ENCODE measurements at regions of chr1 and their contacts with region 1.

Region 1: DNA sequence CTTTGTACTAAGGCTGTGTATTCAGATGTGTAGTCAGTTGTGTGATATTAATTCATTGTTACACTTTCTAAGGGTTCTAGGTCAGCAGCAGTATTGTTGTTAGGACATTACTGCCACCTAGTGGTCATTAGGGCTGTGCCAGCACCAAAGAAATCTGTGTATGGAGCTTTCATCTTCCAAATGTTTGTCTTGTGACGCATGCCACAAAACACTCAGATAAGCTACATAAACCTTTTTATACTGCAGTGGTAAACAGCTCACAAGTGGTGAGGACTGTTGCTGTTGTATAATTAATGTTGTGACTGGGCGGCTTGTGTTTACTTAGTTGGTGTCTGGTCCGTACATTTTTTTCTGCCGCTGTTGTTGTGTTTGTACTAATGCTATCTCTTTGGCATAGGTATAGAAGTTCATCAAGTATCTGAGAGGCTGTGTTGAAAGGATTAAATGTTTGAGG is 51.7 kb downstream of the S1PR1 start:
- DNase-seq: peak in 4 of 5 donors; percentile 40 to 60 (median 50)
- ATAC-seq: peak; percentile 77 to 90 (median 88)
- H3K4me3 ChIP-seq: peak overlapping the region in 5 of 12 donors; percentile 8 to 28 (median 10)
- H3K27ac ChIP-seq: peak overlapping the region in 1 of 12 donors; percentile 61
- H3K4me1 ChIP-seq: peaks cover 0 to 71% (median 2%) of the 10 kb centered on the region in 12 donors
- H3K27me3 ChIP-seq: no peaks in the 10 kb centered on the region
- CTCF ChIP-seq: peak; percentile 89 to 97 (median 94)
- POLR2A ChIP-seq: no peak

Region 2: GRCh38 chr1:100921109-100921706 is 367.3 kb before region 1 on chr1:
- intact Hi-C with region 1: loop called (anchors 1 to 5 kb)
- DNase-seq: no peak
- ATAC-seq: peak in 1 of 4 donors; percentile 45
- H3K4me3 ChIP-seq: no peak overlapping the region
- H3K27ac ChIP-seq: no peak overlapping the region
- H3K4me1 ChIP-seq: no peaks in the 10 kb centered on the region
- H3K27me3 ChIP-seq: no peaks in the 10 kb centered on the region
- CTCF ChIP-seq: peak; percentile 66 to 90 (median 74)
- POLR2A ChIP-seq: no peak

Region 3: DNA sequence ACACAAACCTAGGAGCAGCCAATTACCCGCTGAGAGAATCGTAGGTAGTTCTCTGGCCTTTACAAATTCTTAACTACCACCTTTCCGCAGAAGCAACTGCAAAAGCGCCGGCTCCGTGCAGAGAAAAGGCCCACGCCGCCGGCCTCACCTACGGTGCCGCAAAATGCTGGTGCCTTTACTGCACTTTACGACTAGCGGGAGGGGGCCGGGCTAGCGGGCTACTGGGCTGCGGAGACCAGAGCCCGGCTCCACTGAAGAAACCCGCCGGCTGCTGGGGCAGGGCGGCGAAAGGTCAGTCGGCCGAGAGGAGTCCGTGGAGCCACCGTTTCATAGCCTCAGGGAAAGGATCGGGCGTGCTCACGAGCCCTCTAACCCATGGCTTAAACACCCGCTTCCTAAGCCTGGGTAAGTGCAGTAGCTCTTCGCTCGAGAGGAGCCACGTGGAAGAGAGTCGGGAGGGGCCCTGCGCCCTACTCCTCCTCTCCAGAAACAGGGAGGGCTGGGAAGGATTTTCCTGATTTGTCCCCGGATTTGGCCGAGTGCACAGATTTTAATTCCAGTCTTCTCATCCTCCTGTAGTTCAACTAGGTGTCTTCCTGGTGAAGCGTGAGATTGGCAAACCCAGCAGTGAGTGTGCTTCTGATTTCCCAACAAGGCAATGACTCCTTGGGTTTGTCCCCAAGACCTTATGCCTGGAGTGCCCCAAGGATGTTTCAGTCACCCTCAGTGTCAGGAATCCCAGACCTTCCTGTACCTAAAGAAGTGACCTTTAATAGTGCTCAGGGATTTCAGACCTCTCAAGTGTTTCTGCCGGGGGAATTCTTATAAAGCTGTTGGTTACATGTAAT is 262.6 kb before region 1 on chr1 and contains the start of gene DPH5:
- intact Hi-C with region 1: loop called in 2 of 10 experiments (anchors 10 kb)
- DNase-seq: peak; percentile 88 to 95 (median 94)
- ATAC-seq: peak; percentile 98 to 99 (median 98)
- H3K4me3 ChIP-seq: peak within 1 kb of the TSS; percentile 44 to 88 (median 72)
- H3K27ac ChIP-seq: peak within 1 kb of the TSS; percentile 56 to 93 (median 88)
- H3K4me1 ChIP-seq: peaks cover 0 to 56% (median 18%) of the 10 kb centered on the region in 12 donors
- H3K27me3 ChIP-seq: no peaks in the 10 kb centered on the region
- CTCF ChIP-seq: no peak
- POLR2A ChIP-seq: no peak
- total RNA-seq, gene DPH5: 14.8 to 36.2 (median 26.5) TPM

Region 4: GRCh38 chr1:101043776-101044175 is 244.7 kb before region 1 on chr1:
- intact Hi-C with region 1: loop called in 1 of 10 experiments (anchors 10 kb)
- DNase-seq: no peak
- ATAC-seq: peak; percentile 75 to 86 (median 79)
- H3K4me3 ChIP-seq: no peak overlapping the region
- H3K27ac ChIP-seq: peak overlapping the region in 2 of 12 donors; percentile 19 to 21
- H3K4me1 ChIP-seq: peaks cover 0 to 14% (median 5%) of the 10 kb centered on the region in 12 donors
- H3K27me3 ChIP-seq: no peaks in the 10 kb centered on the region
- CTCF ChIP-seq: peak in 7 of 12 donors; percentile 26 to 48 (median 32)
- POLR2A ChIP-seq: no peak

Region 5: DNA sequence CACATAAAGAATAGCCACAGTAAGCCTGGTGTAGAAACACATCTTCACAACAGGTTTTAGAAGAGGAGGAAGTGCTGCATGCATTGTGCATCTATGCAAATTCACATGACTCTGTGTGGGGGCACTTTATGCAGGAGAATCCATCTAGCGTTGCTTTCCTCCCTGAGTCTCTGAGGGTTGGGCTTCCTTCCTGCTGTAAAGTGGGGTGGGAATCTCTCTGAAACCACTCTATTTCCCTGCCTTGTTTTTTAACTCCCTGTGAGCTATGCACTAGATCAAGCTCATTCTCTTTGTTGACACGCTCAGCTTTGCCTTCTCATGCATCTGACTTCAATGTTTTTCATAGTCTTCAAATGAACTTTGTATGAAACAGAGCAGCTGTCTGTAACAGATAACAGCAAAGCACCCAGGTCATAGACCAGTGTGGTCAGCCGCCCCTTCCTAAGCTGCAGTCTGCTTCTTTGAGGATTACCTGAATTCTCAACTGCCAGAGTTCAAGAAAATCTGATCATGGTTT is 160.2 kb before region 1 on chr1:
- intact Hi-C with region 1: loop called in 2 of 10 experiments (anchors 5 to 10 kb)
- DNase-seq: no peak
- ATAC-seq: peak in 2 of 4 donors; percentile 20 to 65
- H3K4me3 ChIP-seq: no peak overlapping the region
- H3K27ac ChIP-seq: peak overlapping the region in 3 of 12 donors; percentile 5 to 18 (median 15)
- H3K4me1 ChIP-seq: peaks cover 0 to 13% (median 3%) of the 10 kb centered on the region in 12 donors
- H3K27me3 ChIP-seq: no peaks in the 10 kb centered on the region
- CTCF ChIP-seq: no peak
- POLR2A ChIP-seq: no peak

Region 6: DNA sequence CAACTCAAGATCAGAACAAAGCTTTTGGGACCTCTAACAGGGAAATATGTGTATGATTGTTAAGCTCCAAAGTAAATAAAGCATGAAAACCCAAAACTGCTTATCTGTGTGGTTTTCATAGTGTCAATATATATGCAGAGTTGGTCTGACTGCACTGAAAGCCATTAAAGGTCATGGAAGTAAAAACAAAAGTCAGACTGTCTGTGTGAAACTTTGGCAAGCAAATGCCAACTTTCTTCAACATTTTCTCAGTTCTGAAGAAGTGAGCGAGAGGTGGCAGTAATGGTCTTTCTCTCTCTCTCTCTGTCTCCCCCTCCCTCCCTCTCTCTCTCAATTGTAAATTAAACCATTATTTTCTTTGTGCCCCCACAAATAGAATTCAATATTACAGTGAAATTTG is 151.8 kb before region 1 on chr1:
- intact Hi-C with region 1: loop called in 8 of 10 experiments (anchors 2 to 10 kb)
- DNase-seq: no peak
- ATAC-seq: peak; percentile 34 to 68 (median 59)
- H3K4me3 ChIP-seq: no peak overlapping the region
- H3K27ac ChIP-seq: peak overlapping the region in 3 of 12 donors; percentile 23 to 33 (median 25)
- H3K4me1 ChIP-seq: peaks cover 0 to 38% (median 21%) of the 10 kb centered on the region in 12 donors
- H3K27me3 ChIP-seq: no peaks in the 10 kb centered on the region
- CTCF ChIP-seq: peak in 9 of 12 donors; percentile 22 to 57 (median 43)
- POLR2A ChIP-seq: no peak

Measured in heart left ventricle (tissue), 16 donors.